ENCODE measurements at regions of chr2 and their contacts with region 1.

Region 1: DNA sequence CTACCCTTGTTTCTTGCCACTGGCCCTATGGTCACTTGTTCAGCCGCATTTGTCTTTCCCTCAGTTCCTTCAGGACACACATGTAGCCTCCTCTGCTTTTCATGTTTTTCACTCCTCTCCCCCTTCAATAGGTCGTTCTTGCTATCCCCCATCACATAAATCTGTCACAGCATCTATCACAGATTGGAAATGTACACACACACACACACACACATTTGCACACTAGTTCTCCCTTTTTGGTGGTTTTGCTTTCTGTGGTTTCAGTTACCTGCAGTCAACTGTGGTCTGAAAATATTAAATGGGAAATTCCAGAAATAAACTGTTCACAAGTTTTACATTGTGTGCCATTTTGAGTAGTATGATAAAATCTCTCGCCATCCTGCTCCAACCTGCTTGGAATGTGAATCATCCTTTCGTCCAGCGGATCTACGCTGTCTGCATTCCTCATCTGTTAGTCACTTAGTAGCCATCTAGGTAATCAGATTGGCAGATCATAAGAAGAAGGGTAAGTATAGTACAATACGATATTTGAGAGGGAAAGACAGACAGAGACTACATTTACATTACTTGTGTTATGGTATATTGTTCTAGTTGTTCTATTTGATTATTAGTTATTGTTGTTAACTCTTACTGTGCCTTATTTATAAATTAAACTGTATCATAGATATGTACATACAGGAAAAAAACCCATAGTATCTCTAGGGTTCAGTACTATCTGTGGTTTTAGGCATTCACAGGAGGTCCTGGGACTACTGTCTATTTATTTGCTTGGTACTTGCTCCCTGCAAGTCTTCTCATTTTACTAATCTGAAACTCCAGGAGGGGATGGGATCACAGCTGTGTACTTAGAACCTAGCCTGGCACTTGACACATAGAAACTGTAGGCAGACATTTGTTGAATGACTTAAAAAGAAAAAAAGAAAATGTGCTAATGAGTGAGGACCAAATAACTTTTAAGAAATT is 86.1 kb upstream of the PNPT1 start:
- DNase-seq: no peak
- H3K4me3 Mint-ChIP-seq: no peak overlapping the region
- H3K27ac Mint-ChIP-seq: no peak overlapping the region
- H3K4me1 Mint-ChIP-seq: no peaks in the 10 kb centered on the region
- H3K27me3 Mint-ChIP-seq: no peaks in the 10 kb centered on the region

Region 2: DNA sequence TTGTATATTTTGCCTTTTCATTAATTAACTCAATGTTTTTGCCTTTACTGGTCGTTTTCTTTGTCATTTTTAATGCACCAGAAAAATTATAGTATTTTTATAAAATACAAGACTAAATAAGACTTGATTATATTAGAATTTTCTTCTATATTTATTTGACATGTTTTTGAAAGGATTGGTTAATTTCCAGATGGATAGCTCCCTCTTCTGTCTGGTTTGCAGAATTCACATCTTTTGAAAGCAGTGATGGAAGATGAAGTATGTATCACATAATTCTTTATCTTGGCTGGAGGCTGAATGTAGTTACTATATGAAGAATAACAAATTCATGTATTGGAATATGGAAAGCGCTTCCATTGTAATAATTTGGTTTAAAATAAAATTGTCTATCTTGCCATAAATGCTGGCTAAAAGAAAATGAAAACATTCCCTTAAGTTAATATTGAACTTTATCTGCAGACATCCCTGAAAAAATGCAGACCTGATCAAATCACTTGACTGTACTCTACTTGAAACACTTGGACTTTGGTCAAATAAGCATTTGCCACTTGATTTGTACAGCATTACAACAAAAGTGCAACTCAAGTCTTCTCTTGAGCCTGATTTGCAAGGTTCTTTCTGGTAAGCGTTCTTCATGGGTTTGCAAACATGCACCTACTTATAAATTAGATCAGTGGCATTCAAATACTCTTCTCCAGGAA is 230.2 kb after region 1 on chr2:
- CTCF ChIA-PET with region 1: no interaction called
- intact Hi-C with region 1: loop called (anchors 10 kb)
- DNase-seq: no peak
- H3K4me3 Mint-ChIP-seq: no peak overlapping the region
- H3K27ac Mint-ChIP-seq: no peak overlapping the region
- H3K4me1 Mint-ChIP-seq: no peaks in the 10 kb centered on the region
- H3K27me3 Mint-ChIP-seq: peaks cover 4% of the 10 kb centered on the region

Region 3: GRCh38 chr2:56784046-56784445 is 1004.3 kb after region 1 on chr2:
- CTCF ChIA-PET with region 1: no interaction called
- intact Hi-C with region 1: no loop called
- DNase-seq: no peak
- H3K4me3 Mint-ChIP-seq: no peak overlapping the region
- H3K27ac Mint-ChIP-seq: no peak overlapping the region
- H3K4me1 Mint-ChIP-seq: no peaks in the 10 kb centered on the region
- H3K27me3 Mint-ChIP-seq: no peaks in the 10 kb centered on the region

Measured in activated naive CD4-positive, alpha-beta T cell treated with anti-CD3 and anti-CD28 coated beads for 36 hours (primary cell).